A549 (cell line): ENCODE measurements at regions of chr9 and their contacts with region 1.

Region 1: GRCh38 chr9:126743041-126743440 is 61.8 kb upstream of the ZBTB43 start:
- DNase-seq: no peak
- ATAC-seq: no peak
- H3K4me3 ChIP-seq: no peak overlapping the region
- H3K27ac ChIP-seq: no peak overlapping the region
- H3K4me1 ChIP-seq: no peaks in the 10 kb centered on the region
- CTCF ChIP-seq: no peak
- EP300 ChIP-seq: no peak
- POLR2A ChIP-seq: no peak
- RAD21 ChIP-seq: no peak

Region 2: GRCh38 chr9:126722252-126723078 is 20.6 kb before region 1 on chr9:
- CTCF ChIA-PET with region 1: no interaction called
- POLR2A ChIA-PET with region 1: no interaction called
- DNase-seq: peak; percentile 62 to 66
- ATAC-seq: peak; percentile 89 to 96
- H3K4me3 ChIP-seq: peak overlapping the region; percentile 86
- H3K27ac ChIP-seq: peak overlapping the region; percentile 90 to 93
- H3K4me1 ChIP-seq: 0 out of 3 replicates have a peak, but pooled peaks cover 5% of the 10 kb centered on the region
- CTCF ChIP-seq: no peak
- EP300 ChIP-seq: no peak
- POLR2A ChIP-seq: no peak
- RAD21 ChIP-seq: no peak

Region 3: GRCh38 chr9:126733005-126733404 is 10.0 kb before region 1 on chr9:
- CTCF ChIA-PET with region 1: interaction called, 10 read pairs
- POLR2A ChIA-PET with region 1: no interaction called
- DNase-seq: no peak
- ATAC-seq: no peak
- H3K4me3 ChIP-seq: no peak overlapping the region
- H3K27ac ChIP-seq: no peak overlapping the region
- H3K4me1 ChIP-seq: no peaks in the 10 kb centered on the region
- CTCF ChIP-seq: no peak
- EP300 ChIP-seq: no peak
- POLR2A ChIP-seq: no peak
- RAD21 ChIP-seq: no peak

Region 4: DNA sequence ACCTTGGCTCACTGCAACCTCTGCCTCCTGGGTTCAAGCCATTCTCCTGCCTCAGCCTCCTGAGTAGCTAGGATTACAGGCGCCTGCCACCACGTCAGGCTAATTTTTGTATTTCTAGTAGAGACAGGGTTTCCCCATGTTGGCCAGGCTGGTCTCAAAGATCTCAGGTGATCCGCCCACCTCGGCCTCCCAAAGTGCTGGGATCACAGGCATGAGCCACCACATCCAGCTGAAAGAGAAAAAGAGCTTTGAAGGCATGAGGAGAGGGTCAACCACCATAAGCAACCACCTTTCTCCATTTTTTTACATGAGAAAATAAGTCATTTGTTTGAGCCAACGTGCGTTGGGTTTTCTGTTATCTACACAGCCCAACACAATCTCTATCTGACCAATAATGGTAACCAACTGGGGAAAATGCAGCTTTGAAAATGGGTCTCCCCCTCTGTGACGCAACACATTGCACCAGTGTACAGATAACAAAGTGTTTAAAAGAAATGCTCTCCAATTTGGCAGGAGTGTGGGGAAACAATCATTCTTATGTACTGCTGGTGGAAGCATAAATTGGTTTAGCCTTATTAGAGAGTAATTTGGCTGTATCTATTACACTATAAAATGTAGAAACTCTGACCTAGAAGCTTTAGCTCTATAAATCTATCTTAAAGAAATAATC is 16.0 kb after region 1 on chr9:
- CTCF ChIA-PET with region 1: no interaction called
- POLR2A ChIA-PET with region 1: no interaction called
- DNase-seq: no peak
- ATAC-seq: no peak
- H3K4me3 ChIP-seq: no peak overlapping the region
- H3K27ac ChIP-seq: no peak overlapping the region
- H3K4me1 ChIP-seq: no peaks in the 10 kb centered on the region
- CTCF ChIP-seq: no peak
- EP300 ChIP-seq: no peak
- POLR2A ChIP-seq: no peak
- RAD21 ChIP-seq: no peak